B cell (primary cell): ENCODE measurements at regions of chr16 and their contacts with region 1.

Region 1: DNA sequence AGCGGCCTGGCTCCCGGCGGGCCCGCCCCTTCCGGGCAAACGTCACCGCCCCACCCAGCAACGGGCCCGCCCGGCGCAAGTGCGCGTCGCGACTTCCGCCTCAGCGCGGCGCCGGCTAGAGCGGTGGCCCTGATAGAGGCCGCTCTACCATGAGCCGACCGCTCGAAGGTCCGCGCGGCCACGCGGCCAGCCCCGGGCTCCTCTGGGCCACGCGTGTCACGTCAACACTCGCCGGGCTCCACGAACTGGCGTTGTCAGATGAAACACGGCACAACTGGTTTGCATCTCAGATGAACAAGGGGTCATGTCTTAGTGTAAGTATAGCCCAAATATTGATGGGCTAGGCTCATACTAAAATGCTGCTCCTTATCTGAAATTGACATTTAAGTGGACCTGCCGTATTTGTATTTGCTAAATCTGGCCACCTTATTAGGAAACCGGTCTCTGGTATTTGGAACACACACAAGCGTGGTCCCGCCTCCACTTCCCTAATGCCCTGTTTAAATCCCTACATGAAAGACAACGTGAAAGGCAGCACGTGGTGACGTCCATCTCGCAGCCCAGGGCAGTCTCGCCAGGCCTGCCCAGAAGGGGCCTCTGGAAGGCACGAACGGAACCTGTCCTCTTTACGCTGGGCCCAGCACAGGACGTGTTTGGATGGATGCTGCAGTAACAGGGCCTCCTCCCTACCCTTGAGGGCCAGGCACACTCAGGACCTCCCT is at the start of gene ZNF598:
- DNase-seq: peak; percentile 90
- ATAC-seq: peak; percentile 97
- H3K4me3 ChIP-seq: peak within 1 kb of the TSS; percentile 61 to 87 (median 77)
- H3K4me3 Mint-ChIP-seq: peak within 1 kb of the TSS; percentile 95
- H3K27ac ChIP-seq: peak within 1 kb of the TSS; percentile 87 to 95
- H3K27ac Mint-ChIP-seq: peak within 1 kb of the TSS; percentile 95
- H3K4me1 ChIP-seq: peaks cover 35 to 44% of the 10 kb centered on the region in 2 donors
- H3K4me1 Mint-ChIP-seq: peaks cover 38% of the 10 kb centered on the region
- H3K27me3 ChIP-seq: no peaks in the 10 kb centered on the region
- H3K27me3 Mint-ChIP-seq: no peaks in the 10 kb centered on the region
- CTCF ChIP-seq: no peak
- total RNA-seq, gene ZNF598: 49.5 and 50.3 TPM in 2 replicates

Region 2: DNA sequence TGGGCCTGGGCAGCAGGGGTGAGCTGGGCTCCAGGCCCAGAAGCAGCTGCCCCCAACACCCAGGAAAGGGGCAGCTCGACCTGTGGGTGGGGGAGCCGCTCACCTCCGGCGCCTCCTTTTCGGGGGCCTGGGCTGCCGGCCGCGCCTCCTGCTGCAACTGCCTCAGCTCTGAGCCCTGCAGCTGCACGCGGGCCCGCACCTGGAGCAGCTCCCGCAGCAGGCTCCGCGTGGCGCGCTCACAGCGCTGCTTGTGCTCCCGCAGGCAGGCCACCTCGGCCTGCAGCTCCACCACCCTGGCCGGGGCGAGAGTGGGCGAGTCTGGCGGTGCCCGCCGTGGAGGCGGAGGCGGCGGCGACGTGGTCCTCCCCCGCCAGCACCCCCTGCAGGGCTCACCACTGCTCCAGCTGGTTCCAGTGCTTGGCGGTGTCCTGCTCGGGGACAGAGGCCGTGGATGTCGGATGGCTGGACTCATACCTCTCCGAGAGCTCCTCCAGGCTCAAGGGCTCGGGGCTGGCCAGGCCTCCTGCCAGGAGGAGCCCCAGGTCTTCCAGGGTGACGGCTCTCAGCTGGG is 566.5 kb before region 1 on chr16:
- CTCF ChIA-PET with region 1: no interaction called
- POLR2A ChIA-PET with region 1: no interaction called
- intact Hi-C with region 1: no loop called
- DNase-seq: no peak
- ATAC-seq: no peak
- H3K4me3 ChIP-seq: no peak overlapping the region
- H3K4me3 Mint-ChIP-seq: no peak overlapping the region
- H3K27ac ChIP-seq: peak overlapping the region in 1 of 2 donors; percentile 100
- H3K27ac Mint-ChIP-seq: no peak overlapping the region
- H3K4me1 ChIP-seq: peaks cover 24% of the 10 kb centered on the region in 2 donors
- H3K4me1 Mint-ChIP-seq: peaks cover 4% of the 10 kb centered on the region
- H3K27me3 ChIP-seq: no peaks in the 10 kb centered on the region
- H3K27me3 Mint-ChIP-seq: no peaks in the 10 kb centered on the region
- CTCF ChIP-seq: no peak

Region 3: DNA sequence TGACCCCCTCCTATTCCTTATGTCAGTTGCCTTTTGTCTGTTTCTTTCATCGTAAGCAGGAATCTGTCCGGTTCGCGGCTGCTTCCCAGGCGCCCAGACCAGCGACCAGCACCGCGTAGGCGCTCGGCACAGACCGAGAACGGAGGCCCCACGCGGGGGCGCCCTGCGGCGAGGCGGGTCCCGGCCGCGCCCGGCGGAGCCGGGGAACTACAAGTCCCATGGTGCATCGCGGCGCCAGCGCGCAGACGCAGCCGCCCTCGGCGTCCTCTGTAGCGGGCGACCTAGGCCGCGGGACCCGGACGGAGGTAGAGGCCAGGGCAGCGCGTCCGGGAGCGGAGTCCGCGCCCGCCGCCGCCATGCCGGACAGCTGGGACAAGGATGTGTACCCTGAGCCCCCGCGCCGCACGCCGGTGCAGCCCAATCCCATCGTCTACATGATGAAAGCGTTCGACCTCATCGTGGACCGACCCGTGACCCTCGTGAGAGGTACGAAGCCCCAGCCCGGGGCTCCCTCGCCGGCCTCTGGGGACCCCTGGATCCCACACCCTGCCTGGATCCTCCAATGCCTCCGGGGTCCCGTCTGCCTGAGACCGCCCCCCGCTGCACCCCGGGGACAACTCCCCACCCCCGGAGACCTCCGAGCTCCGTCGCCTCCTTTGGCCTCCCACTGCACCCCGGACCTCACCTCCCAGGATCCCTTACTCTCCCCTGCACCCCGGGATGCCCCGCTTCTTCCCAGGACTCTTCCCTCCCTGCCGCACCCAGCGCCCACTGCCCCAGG is 50.5 kb before region 1 on chr16 and contains the start of gene NDUFB10:
- CTCF ChIA-PET with region 1: interaction called, 3 read pairs
- POLR2A ChIA-PET with region 1: interaction called, 3 read pairs
- intact Hi-C with region 1: loop called (anchors 1 kb)
- DNase-seq: peak; percentile 93
- ATAC-seq: peak; percentile 94
- H3K4me3 ChIP-seq: peak within 1 kb of the TSS; percentile 51 to 89 (median 86)
- H3K4me3 Mint-ChIP-seq: peak within 1 kb of the TSS; percentile 89
- H3K27ac ChIP-seq: peak within 1 kb of the TSS; percentile 51 to 77
- H3K27ac Mint-ChIP-seq: peak within 1 kb of the TSS; percentile 89
- H3K4me1 ChIP-seq: peaks cover 24 to 47% of the 10 kb centered on the region in 2 donors
- H3K4me1 Mint-ChIP-seq: peaks cover 38% of the 10 kb centered on the region
- H3K27me3 ChIP-seq: no peaks in the 10 kb centered on the region
- H3K27me3 Mint-ChIP-seq: peaks cover 3% of the 10 kb centered on the region
- CTCF ChIP-seq: peak; percentile 80
- total RNA-seq, gene NDUFB10: 63.7 and 70.4 TPM in 2 replicates

Region 4: GRCh38 chr16:1964506-1965395 is 45.2 kb before region 1 on chr16 and contains the start of gene RPS2:
- CTCF ChIA-PET with region 1: no interaction called
- POLR2A ChIA-PET with region 1: interaction called, 3 read pairs
- intact Hi-C with region 1: loop called (anchors 1 kb)
- DNase-seq: peak; percentile 99
- ATAC-seq: peak; percentile 93
- H3K4me3 ChIP-seq: peak within 1 kb of the TSS; percentile 60 to 94 (median 76)
- H3K4me3 Mint-ChIP-seq: peak within 1 kb of the TSS; percentile 94
- H3K27ac ChIP-seq: peak within 1 kb of the TSS; percentile 83 to 100
- H3K27ac Mint-ChIP-seq: peak within 1 kb of the TSS; percentile 97
- H3K4me1 ChIP-seq: peaks cover 26 to 49% of the 10 kb centered on the region in 2 donors
- H3K4me1 Mint-ChIP-seq: peaks cover 42% of the 10 kb centered on the region
- H3K27me3 ChIP-seq: no peaks in the 10 kb centered on the region
- H3K27me3 Mint-ChIP-seq: no peaks in the 10 kb centered on the region
- CTCF ChIP-seq: no peak
- total RNA-seq, gene RPS2: 3,155 and 3,261 TPM in 2 replicates

Region 5: GRCh38 chr16:1983544-1984346 is 26.2 kb before region 1 on chr16 and contains the start of gene GFER:
- CTCF ChIA-PET with region 1: no interaction called
- POLR2A ChIA-PET with region 1: no interaction called
- intact Hi-C with region 1: loop called (anchors 1 kb)
- DNase-seq: peak; percentile 88
- ATAC-seq: peak; percentile 94
- H3K4me3 ChIP-seq: peak within 1 kb of the TSS; percentile 3 to 78 (median 62)
- H3K4me3 Mint-ChIP-seq: peak within 1 kb of the TSS; percentile 88
- H3K27ac ChIP-seq: peak within 1 kb of the TSS; percentile 10 to 66
- H3K27ac Mint-ChIP-seq: peak within 1 kb of the TSS; percentile 83
- H3K4me1 ChIP-seq: peaks cover 16 to 35% of the 10 kb centered on the region in 2 donors
- H3K4me1 Mint-ChIP-seq: peaks cover 25% of the 10 kb centered on the region
- H3K27me3 ChIP-seq: peaks cover 0 to 39% (median 19%) of the 10 kb centered on the region in 4 experiments
- H3K27me3 Mint-ChIP-seq: peaks cover 6% of the 10 kb centered on the region
- CTCF ChIP-seq: peak; percentile 38
- total RNA-seq, gene GFER: 28.2 and 30.4 TPM in 2 replicates

Region 6: GRCh38 chr16:2047330-2048115 is 37.6 kb after region 1 on chr16 and contains the starts of genes NTHL1 and TSC2:
- CTCF ChIA-PET with region 1: no interaction called
- POLR2A ChIA-PET with region 1: no interaction called
- intact Hi-C with region 1: loop called (anchors 1 kb)
- DNase-seq: peak; percentile 95
- ATAC-seq: peak; percentile 97
- H3K4me3 ChIP-seq: peak within 1 kb of the TSS; percentile 27 to 79 (median 78)
- H3K4me3 Mint-ChIP-seq: peak within 1 kb of the TSS; percentile 91
- H3K27ac ChIP-seq: peak within 1 kb of the TSS in 1 of 2 donors; percentile 63
- H3K27ac Mint-ChIP-seq: peak within 1 kb of the TSS; percentile 76
- H3K4me1 ChIP-seq: peaks cover 17 to 35% of the 10 kb centered on the region in 2 donors
- H3K4me1 Mint-ChIP-seq: peaks cover 20% of the 10 kb centered on the region
- H3K27me3 ChIP-seq: no peaks in the 10 kb centered on the region
- H3K27me3 Mint-ChIP-seq: no peaks in the 10 kb centered on the region
- CTCF ChIP-seq: peak; percentile 26
- total RNA-seq, gene NTHL1: 14.1 and 17.5 TPM in 2 replicates
- total RNA-seq, gene TSC2: 188 and 194 TPM in 2 replicates